ENCODE measurements at regions of chr13 and their contacts with region 1.

Region 1: DNA sequence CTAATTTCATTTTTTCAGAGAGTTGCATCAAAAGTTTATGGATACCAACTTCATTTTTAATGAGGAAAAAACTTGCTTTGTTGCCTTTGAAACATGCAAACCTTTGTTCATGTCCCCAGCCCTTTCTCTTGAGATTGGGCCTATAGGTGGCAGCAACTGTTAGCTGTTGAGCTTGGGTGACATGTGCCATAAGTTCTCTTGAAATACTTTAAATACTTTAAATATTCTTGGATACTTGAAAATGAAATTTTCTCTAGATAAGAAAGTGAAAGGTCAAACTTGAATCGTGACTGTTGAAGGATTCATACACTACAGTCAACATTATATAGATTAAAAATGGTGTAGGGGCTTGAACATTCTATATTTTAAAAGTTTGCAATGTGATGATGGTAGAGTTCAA is 294.9 kb downstream of the NDFIP2 start:
- DNase-seq: peak; percentile 87
- ATAC-seq: peak; percentile 83
- H3K4me3 ChIP-seq: no peak overlapping the region
- H3K27ac ChIP-seq: no peak overlapping the region
- H3K4me1 ChIP-seq: peaks cover 7% of the 10 kb centered on the region
- H3K27me3 ChIP-seq: no peaks in the 10 kb centered on the region
- CTCF ChIP-seq: peak; percentile 81
- POLR2A ChIP-seq: no peak
- RAD21 ChIP-seq: peak; percentile 93

Region 2: DNA sequence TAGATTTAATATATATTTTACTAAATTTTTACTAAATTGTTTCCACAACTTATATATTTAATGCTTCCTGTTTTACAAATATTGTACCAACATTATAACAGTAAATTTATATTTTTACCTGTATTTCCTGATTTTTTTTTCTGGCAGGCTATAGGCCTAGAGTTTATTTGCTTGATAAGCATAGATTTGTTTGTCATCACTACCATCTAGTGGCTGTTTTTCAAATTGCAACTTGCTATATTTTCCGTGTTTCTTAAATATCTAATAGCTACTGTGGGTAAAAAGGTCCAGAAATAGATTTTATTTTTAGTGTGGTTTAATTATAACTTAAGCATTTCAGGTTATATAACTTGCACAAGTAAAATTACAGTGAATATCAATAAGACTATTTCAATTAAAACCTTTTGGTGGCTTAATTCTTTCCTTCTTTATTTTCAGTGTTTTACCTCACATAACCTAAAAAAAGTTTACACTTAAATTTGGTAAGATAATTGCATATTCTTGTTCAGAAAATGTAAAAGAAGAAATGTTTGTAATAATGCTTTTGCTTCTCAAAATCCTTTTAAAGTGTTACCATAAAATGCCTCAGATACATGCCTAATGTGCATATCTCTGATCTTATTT is 234.3 kb before region 1 on chr13:
- CTCF ChIA-PET with region 1: no interaction called
- POLR2A ChIA-PET with region 1: no interaction called
- dilution Hi-C with region 1: no loop called
- in situ Hi-C with region 1: no loop called
- intact Hi-C with region 1: loop called (anchors 10 kb)
- DNase-seq: peak; percentile 73
- ATAC-seq: peak; percentile 68
- H3K4me3 ChIP-seq: no peak overlapping the region
- H3K27ac ChIP-seq: no peak overlapping the region
- H3K4me1 ChIP-seq: no peaks in the 10 kb centered on the region
- H3K27me3 ChIP-seq: no peaks in the 10 kb centered on the region
- CTCF ChIP-seq: peak; percentile 83
- POLR2A ChIP-seq: no peak
- RAD21 ChIP-seq: peak; percentile 85

Region 3: GRCh38 chr13:79869326-79869725 is 93.5 kb after region 1 on chr13:
- CTCF ChIA-PET with region 1: no interaction called
- POLR2A ChIA-PET with region 1: no interaction called
- dilution Hi-C with region 1: no loop called
- in situ Hi-C with region 1: no loop called
- intact Hi-C with region 1: no loop called
- DNase-seq: peak; percentile 37
- ATAC-seq: no peak
- H3K4me3 ChIP-seq: no peak overlapping the region
- H3K27ac ChIP-seq: no peak overlapping the region
- H3K4me1 ChIP-seq: no peaks in the 10 kb centered on the region; the same call in 1 of the 2 replicates
- H3K27me3 ChIP-seq: no peaks in the 10 kb centered on the region
- CTCF ChIP-seq: no peak
- POLR2A ChIP-seq: no peak
- RAD21 ChIP-seq: no peak

Region 4: DNA sequence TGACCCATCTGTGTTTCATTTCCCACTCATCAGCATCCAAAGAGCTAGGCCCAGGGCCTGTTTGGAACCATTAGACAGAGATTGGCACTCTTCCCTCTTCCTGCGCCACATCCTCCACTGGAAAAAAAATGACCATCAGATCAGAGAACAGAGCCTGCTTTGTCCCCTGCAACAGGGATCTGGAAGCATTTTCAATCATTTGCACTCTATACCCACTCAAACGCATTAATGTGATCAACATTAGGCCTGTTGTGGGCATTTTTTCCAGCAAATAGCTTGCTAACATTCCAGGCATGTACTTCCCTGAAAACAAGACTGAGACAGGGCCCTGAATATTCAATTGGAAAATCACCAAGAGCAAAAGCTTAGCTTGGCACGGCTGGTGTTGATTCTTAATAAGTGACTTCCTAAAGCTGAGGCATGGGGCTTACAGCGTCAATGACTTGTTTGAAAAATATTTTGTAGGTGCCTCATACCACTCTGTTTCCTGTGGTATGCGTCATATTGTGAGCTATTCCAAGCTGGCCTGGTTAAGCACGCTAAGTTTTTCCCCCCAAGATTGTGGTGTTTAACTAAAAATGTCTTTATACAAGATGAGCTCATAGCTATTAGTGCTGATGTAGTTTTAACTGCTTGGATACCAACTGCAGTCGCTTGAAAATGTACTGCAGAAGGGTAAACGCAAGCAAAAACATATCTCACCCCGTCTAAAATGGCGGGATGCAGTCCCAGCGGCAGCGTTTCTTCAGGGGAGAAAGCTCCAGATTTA is 160.7 kb after region 1 on chr13:
- CTCF ChIA-PET with region 1: interaction called, 3 read pairs
- POLR2A ChIA-PET with region 1: no interaction called
- dilution Hi-C with region 1: no loop called
- in situ Hi-C with region 1: loop called (anchors 10 kb)
- intact Hi-C with region 1: loop called (anchors 1 kb)
- DNase-seq: peak; percentile 100
- ATAC-seq: peak; percentile 92
- H3K4me3 ChIP-seq: no peak overlapping the region
- H3K27ac ChIP-seq: peak overlapping the region; percentile 98
- H3K4me1 ChIP-seq: peaks cover 20% of the 10 kb centered on the region
- H3K27me3 ChIP-seq: no peaks in the 10 kb centered on the region
- CTCF ChIP-seq: no peak
- POLR2A ChIP-seq: peak; percentile 40; the same call in 1 of the 2 replicates
- RAD21 ChIP-seq: peak; percentile 35

Region 5: DNA sequence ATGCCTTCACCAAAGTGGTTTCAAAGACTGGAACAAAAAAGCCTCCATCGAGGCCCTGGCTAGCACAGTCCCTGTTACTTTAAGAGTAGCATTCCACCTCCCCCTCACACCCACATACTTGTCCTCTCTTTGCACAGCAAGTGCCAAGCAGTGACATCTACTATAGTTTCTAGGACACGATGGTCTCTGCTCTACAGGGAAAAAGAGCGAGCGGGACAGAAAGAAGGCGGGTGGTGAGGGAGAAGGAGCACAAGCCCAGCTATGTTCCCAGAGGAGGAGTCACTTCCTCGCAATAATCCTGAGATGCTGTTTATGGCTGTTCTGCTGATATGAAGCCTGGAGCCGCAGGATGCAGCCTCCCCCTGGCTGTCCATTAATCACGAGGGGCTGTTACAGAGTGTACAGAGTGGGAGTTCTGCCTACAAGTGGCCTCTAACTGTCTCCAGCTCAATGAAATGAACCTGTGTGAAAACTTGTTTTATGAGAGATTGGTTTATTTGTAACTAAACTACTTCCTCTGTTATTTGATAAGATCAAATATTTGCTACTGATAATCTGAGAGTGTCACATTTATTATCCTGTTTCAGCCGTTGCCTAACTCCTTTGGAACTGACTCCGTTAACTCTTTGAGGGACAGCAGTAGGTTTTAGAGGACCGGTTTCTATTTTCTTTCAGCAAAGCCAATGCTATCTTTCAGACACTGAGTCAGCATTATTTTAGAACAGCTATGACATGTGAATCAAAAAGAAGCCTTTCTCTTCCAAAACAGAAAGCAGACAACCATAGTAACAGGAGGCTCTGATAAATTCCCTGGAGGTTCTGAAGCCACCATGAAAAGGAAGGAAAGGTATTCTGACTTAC is 357.1 kb after region 1 on chr13:
- CTCF ChIA-PET with region 1: interaction called, 4 read pairs
- POLR2A ChIA-PET with region 1: no interaction called
- dilution Hi-C with region 1: no loop called
- in situ Hi-C with region 1: no loop called
- intact Hi-C with region 1: loop called (anchors 5 kb)
- DNase-seq: peak; percentile 62
- ATAC-seq: peak; percentile 88
- H3K4me3 ChIP-seq: peak overlapping the region; percentile 26
- H3K27ac ChIP-seq: peak overlapping the region; percentile 13
- H3K4me1 ChIP-seq: peaks cover 3% of the 10 kb centered on the region; the same call in 1 of the 2 replicates
- H3K27me3 ChIP-seq: no peaks in the 10 kb centered on the region
- CTCF ChIP-seq: no peak
- POLR2A ChIP-seq: no peak
- RAD21 ChIP-seq: no peak

Region 6: DNA sequence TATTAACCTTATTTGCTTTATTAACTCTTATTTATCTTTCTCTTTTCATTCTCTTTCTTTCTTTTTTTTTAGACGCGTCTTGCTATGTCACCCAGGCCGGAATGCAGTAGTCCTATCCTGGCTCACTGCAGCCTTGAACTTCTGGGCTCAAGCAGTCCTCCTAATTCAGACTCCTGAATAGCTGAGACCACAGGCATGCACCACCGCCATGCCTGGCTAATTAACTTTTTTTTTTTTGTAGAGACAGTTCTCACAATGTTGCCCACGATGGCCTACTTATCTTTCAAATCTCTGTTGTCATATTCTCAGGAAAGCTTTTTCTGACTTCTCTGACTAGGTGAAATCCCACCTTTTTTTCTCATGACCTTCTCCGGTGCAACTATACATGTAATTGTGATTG is 572.9 kb after region 1 on chr13:
- CTCF ChIA-PET with region 1: no interaction called
- POLR2A ChIA-PET with region 1: interaction called, 22 read pairs
- dilution Hi-C with region 1: no loop called
- in situ Hi-C with region 1: no loop called
- intact Hi-C with region 1: no loop called
- DNase-seq: no peak
- ATAC-seq: no peak
- H3K4me3 ChIP-seq: no peak overlapping the region
- H3K27ac ChIP-seq: no peak overlapping the region
- H3K4me1 ChIP-seq: no peaks in the 10 kb centered on the region
- H3K27me3 ChIP-seq: no peaks in the 10 kb centered on the region
- CTCF ChIP-seq: no peak
- POLR2A ChIP-seq: no peak
- RAD21 ChIP-seq: no peak